HCT116 (cell line): ENCODE measurements at regions of chr6 and their contacts with region 1.

Region 1: GRCh38 chr6:159174263-159174969 is 5.2 kb downstream of the FNDC1 start:
- DNase-seq: peak; percentile 44
- ATAC-seq: peak; percentile 99
- H3K4me3 ChIP-seq: no peak overlapping the region
- H3K27ac ChIP-seq: no peak overlapping the region
- H3K4me1 ChIP-seq: no peaks in the 10 kb centered on the region; a peak in 1 of 4 replicates
- H3K27me3 ChIP-seq: peaks cover 15% of the 10 kb centered on the region; the same call in 1 of the 2 replicates
- CTCF ChIP-seq: peak; percentile 84 to 99 (median 99)
- POLR2A ChIP-seq: no peak
- RAD21 ChIP-seq: peak; percentile 97

Region 2: DNA sequence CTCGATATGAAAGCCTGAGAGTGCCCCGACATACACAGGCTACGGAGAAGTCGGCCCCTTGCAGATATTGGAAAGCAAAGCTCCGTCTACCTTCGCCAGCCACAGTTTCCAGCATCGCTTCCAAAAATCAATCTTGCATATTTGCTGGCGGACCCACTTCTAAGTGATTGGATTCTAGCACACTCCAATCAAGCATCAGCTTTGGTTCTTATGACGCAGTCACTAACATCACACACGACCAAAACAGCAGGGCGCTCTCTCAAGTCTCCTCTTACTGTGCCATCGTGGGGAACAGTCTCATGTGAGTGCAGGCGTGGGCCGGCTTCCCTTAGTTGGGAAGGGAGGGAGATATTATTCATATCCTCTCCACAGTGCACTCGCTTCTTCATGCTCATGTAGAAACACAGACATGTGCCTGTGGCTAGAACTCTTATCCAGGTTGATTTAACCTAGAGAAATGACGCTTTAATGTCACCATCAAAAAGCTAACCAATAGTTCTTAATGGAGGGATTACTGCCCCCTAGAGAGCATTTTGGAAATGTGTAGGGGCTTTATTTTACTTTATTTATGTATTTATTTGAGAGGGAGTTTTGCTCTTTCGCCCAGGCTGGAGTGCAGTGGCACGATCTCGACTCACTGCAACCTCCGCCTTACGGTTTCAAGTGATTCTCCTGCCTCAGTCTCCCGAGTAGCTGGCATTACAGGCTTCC is 288.9 kb after region 1 on chr6:
- CTCF ChIA-PET with region 1: interaction called, 4 read pairs
- POLR2A ChIA-PET with region 1: no interaction called
- RAD21 ChIA-PET with region 1: no interaction called
- intact Hi-C with region 1: loop called (anchors 1 kb)
- DNase-seq: peak; percentile 16
- ATAC-seq: peak; percentile 72
- H3K4me3 ChIP-seq: no peak overlapping the region
- H3K27ac ChIP-seq: no peak overlapping the region
- H3K4me1 ChIP-seq: no peaks in the 10 kb centered on the region
- H3K27me3 ChIP-seq: 0 out of 2 replicates have a peak, but pooled peaks cover 3% of the 10 kb centered on the region
- CTCF ChIP-seq: peak; percentile 43 to 52 (median 46); a peak in 4 of 6 replicates
- POLR2A ChIP-seq: no peak
- RAD21 ChIP-seq: peak; percentile 66

Region 3: DNA sequence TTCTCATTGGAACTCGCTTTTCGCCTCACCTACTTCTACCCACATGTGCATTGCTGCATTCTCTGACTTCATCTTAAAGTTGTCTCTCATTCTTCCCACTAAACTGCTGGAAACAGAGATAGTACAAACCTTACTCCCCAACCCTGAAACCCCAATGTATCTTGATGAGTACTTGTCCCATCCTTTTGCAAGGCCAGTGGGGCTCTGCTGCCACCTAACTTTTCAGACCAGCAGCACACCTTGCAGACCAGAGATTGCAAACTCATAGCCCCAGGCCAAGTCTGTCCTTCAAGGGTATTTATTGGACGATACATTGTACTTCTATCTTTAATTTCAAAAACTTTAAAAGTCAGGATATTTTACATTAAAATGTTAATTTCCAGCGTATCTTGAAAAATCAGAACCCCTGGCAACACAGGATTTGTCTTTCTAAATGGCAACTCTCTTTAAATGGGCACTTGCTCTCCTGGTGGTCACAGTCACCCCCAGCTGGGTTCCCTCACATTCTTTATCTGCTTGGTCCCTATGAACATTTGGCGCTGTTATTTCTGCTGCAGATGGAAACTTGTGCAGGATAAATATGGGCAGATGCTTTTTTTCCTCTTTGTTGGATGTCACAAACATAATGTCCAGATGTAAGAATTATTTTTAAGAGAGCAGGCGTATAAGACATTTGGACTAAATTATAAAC is 434.7 kb after region 1 on chr6:
- CTCF ChIA-PET with region 1: interaction called, 9 read pairs
- POLR2A ChIA-PET with region 1: no interaction called
- RAD21 ChIA-PET with region 1: no interaction called
- intact Hi-C with region 1: loop called (anchors 1 kb)
- DNase-seq: peak; percentile 58
- ATAC-seq: peak; percentile 97
- H3K4me3 ChIP-seq: no peak overlapping the region
- H3K27ac ChIP-seq: no peak overlapping the region
- H3K4me1 ChIP-seq: no peaks in the 10 kb centered on the region
- H3K27me3 ChIP-seq: no peaks in the 10 kb centered on the region
- CTCF ChIP-seq: peak; percentile 89 to 95 (median 94)
- POLR2A ChIP-seq: no peak
- RAD21 ChIP-seq: peak; percentile 96

Region 4: GRCh38 chr6:159654483-159655098 is 480.2 kb after region 1 on chr6:
- CTCF ChIA-PET with region 1: interaction called, 8 read pairs
- POLR2A ChIA-PET with region 1: no interaction called
- RAD21 ChIA-PET with region 1: interaction called in 1 of 2 experiments, 3 read pairs
- intact Hi-C with region 1: loop called (anchors 2 kb)
- DNase-seq: peak; percentile 41
- ATAC-seq: peak; percentile 66
- H3K4me3 ChIP-seq: no peak overlapping the region
- H3K27ac ChIP-seq: no peak overlapping the region
- H3K4me1 ChIP-seq: no peaks in the 10 kb centered on the region
- H3K27me3 ChIP-seq: no peaks in the 10 kb centered on the region
- CTCF ChIP-seq: peak; percentile 32 to 74 (median 74); a peak in 5 of 6 replicates
- POLR2A ChIP-seq: no peak
- RAD21 ChIP-seq: peak; percentile 87

Region 5: DNA sequence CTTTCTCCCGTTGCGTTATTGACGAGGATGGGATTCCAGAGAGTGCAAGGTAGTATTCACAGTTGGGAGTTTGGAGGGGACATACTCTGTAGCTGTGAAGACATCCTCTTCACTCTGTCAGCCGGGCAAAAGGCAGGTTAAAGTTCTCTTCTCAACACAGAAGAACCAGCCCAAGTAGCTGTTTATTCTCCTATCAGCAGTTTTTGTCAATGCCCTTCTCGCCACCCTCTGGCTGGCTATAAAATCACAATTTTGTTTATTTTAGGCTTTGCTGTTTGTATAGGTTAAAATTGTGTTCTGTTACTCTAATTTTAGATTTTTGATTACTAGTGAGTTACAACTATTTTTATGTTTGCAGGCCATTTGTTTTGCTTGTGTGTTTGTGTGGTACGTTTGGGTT is 678.5 kb after region 1 on chr6:
- CTCF ChIA-PET with region 1: no interaction called
- POLR2A ChIA-PET with region 1: no interaction called
- RAD21 ChIA-PET with region 1: no interaction called
- intact Hi-C with region 1: loop called (anchors 10 kb)
- DNase-seq: no peak
- ATAC-seq: peak; percentile 58; the same call in 1 of the 2 replicates
- H3K4me3 ChIP-seq: no peak overlapping the region
- H3K27ac ChIP-seq: no peak overlapping the region
- H3K4me1 ChIP-seq: no peaks in the 10 kb centered on the region
- H3K27me3 ChIP-seq: no peaks in the 10 kb centered on the region
- CTCF ChIP-seq: peak in 2 of 3 experiments; percentile 14 to 49; a peak in 2 of 6 replicates
- POLR2A ChIP-seq: no peak
- RAD21 ChIP-seq: peak; percentile 61